Naive thymus-derived CD4-positive, alpha-beta T cell (primary cell): ENCODE measurements at regions of chr16 and their contacts with region 1.

Region 1: GRCh38 chr16:3264137-3265036 is 8.0 kb upstream of the MEFV start:
- DNase-seq: peak; percentile 88 to 97 (median 96)
- ATAC-seq: peak; percentile 88
- H3K4me3 ChIP-seq: peak overlapping the region; percentile 81
- H3K4me3 Mint-ChIP-seq: peak overlapping the region; percentile 84 to 97 (median 93)
- H3K27ac ChIP-seq: peak overlapping the region; percentile 92
- H3K27ac Mint-ChIP-seq: peak overlapping the region; percentile 93 to 98 (median 97)
- H3K4me1 ChIP-seq: peaks cover 18 to 20% of the 10 kb centered on the region in 2 donors
- H3K4me1 Mint-ChIP-seq: peaks cover 6 to 42% (median 29%) of the 10 kb centered on the region in 7 donors
- H3K27me3 ChIP-seq: no peaks in the 10 kb centered on the region
- H3K27me3 Mint-ChIP-seq: no peaks in the 10 kb centered on the region

Region 2: GRCh38 chr16:3158471-3159314 is 105.7 kb before region 1 on chr16:
- CTCF ChIA-PET with region 1: interaction called, 3 read pairs
- POLR2A ChIA-PET with region 1: interaction called, 5 read pairs
- intact Hi-C with region 1: loop called in 1 of 2 experiments (anchors 2 kb)
- DNase-seq: peak; percentile 80 to 98 (median 91)
- ATAC-seq: peak; percentile 97
- H3K4me3 ChIP-seq: peak overlapping the region; percentile 86
- H3K4me3 Mint-ChIP-seq: peak overlapping the region; percentile 87 to 94 (median 92)
- H3K27ac ChIP-seq: peak overlapping the region; percentile 86
- H3K27ac Mint-ChIP-seq: peak overlapping the region; percentile 90 to 99 (median 95)
- H3K4me1 ChIP-seq: peaks cover 5 to 9% of the 10 kb centered on the region in 2 donors
- H3K4me1 Mint-ChIP-seq: peaks cover 10 to 42% (median 28%) of the 10 kb centered on the region in 7 donors
- H3K27me3 ChIP-seq: no peaks in the 10 kb centered on the region
- H3K27me3 Mint-ChIP-seq: peaks cover 0 to 26% (median 0%) of the 10 kb centered on the region in 5 donors

Region 3: DNA sequence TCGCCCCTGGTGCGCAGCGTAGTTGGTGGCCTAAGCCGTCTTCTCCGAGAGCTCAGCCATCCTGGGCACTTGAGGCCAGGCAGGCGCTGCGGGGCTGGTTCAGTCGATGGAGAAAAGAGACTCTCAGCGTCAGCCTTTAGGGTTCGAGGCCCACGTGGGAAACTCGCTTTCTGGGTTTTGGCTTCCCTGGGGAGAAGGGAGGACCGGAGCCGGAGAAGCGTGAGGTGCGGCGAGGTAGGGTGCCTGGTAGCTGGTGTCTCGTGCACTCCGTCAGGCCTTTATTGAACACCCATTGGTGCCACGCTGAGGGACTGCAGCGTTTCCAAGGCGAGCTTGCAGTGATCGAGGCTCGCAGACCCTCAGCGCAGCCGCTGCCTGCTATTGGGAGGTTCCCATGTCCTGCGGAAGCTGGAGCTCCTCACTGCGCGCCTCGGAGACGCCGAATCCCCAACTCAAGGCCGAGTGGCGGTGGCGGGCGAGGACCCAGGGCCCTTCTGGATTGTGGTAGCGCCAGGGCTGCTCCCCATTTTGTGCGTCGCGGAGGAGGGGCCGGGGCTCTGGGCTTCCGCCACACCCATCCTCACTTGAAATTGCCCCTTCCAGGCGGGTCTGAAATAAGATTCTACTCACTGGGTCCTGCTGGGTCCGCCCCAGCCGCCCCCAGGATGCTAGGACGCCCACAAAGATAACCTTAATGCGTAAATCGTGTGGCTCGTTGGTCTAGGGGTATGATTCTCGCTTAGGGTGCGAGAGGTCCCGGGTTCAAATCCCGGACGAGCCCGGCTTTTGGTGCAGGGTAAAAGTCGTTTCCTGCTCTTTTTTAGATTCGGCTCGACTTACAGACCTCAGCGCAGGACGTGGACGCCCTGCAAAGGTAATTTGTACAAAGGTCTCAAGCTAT is 75.2 kb before region 1 on chr16:
- CTCF ChIA-PET with region 1: no interaction called
- POLR2A ChIA-PET with region 1: interaction called, 6 read pairs
- intact Hi-C with region 1: loop called in 1 of 2 experiments (anchors 2 kb)
- DNase-seq: peak in 2 of 9 donors; percentile 32 to 53
- ATAC-seq: peak; percentile 44
- H3K4me3 ChIP-seq: peak overlapping the region; percentile 6
- H3K4me3 Mint-ChIP-seq: peak overlapping the region; percentile 64 to 86 (median 78)
- H3K27ac ChIP-seq: no peak overlapping the region
- H3K27ac Mint-ChIP-seq: peak overlapping the region in 7 of 9 donors; percentile 28 to 88 (median 72)
- H3K4me1 ChIP-seq: peaks cover 23 to 26% of the 10 kb centered on the region in 2 donors
- H3K4me1 Mint-ChIP-seq: peaks cover 31 to 49% (median 43%) of the 10 kb centered on the region in 7 donors
- H3K27me3 ChIP-seq: peaks cover 28 to 32% of the 10 kb centered on the region in 2 donors
- H3K27me3 Mint-ChIP-seq: peaks cover 65 to 74% (median 72%) of the 10 kb centered on the region in 5 donors

Region 4: DNA sequence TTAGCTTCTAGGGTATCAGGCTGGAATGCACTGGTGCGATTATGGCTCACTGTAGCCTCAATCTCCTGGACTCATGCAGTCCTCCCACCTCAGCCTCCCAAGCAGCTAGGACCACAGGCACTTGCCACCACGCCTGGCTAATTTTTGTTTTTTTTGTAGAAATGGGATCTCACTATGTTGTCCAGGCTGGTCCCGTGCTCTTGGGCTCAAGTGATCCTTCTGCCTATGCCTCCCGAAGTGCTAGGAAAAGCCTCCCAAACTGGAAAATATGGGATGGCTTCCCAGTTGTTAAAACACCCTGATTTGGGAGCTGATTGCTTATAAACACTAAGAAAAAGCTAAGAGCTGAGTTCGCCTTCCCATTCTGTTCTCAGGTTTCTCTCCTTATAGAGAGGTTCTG is 12.3 kb after region 1 on chr16:
- CTCF ChIA-PET with region 1: no interaction called
- POLR2A ChIA-PET with region 1: interaction called, 86 read pairs
- intact Hi-C with region 1: no loop called
- DNase-seq: no peak
- ATAC-seq: no peak
- H3K4me3 ChIP-seq: no peak overlapping the region
- H3K4me3 Mint-ChIP-seq: no peak overlapping the region
- H3K27ac ChIP-seq: no peak overlapping the region
- H3K27ac Mint-ChIP-seq: no peak overlapping the region
- H3K4me1 ChIP-seq: peaks cover 0 to 1% of the 10 kb centered on the region in 2 donors
- H3K4me1 Mint-ChIP-seq: peaks cover 0 to 7% (median 0%) of the 10 kb centered on the region in 7 donors
- H3K27me3 ChIP-seq: no peaks in the 10 kb centered on the region
- H3K27me3 Mint-ChIP-seq: peaks cover 0 to 12% (median 0%) of the 10 kb centered on the region in 5 donors

Region 5: GRCh38 chr16:3443108-3444031 is 179.0 kb after region 1 on chr16 and contains the starts of genes NAA60 and ZNF597:
- CTCF ChIA-PET with region 1: no interaction called
- POLR2A ChIA-PET with region 1: interaction called, 3 read pairs
- intact Hi-C with region 1: loop called in 1 of 2 experiments (anchors 1 kb)
- DNase-seq: peak; percentile 38 to 86 (median 79)
- ATAC-seq: peak; percentile 96
- H3K4me3 ChIP-seq: peak within 1 kb of the TSS; percentile 47
- H3K4me3 Mint-ChIP-seq: peak within 1 kb of the TSS; percentile 88 to 100 (median 96)
- H3K27ac ChIP-seq: peak within 1 kb of the TSS; percentile 89
- H3K27ac Mint-ChIP-seq: peak within 1 kb of the TSS; percentile 82 to 98 (median 96)
- H3K4me1 ChIP-seq: peaks cover 5 to 15% of the 10 kb centered on the region in 2 donors
- H3K4me1 Mint-ChIP-seq: peaks cover 0 to 46% (median 24%) of the 10 kb centered on the region in 7 donors
- H3K27me3 ChIP-seq: no peaks in the 10 kb centered on the region
- H3K27me3 Mint-ChIP-seq: peaks cover 0 to 5% (median 0%) of the 10 kb centered on the region in 5 donors
- total RNA-seq, gene NAA60: 38.7 to 63.7 (median 55.3) TPM
- total RNA-seq, gene ZNF597: 2.2 to 5.9 (median 3.8) TPM

Region 6: GRCh38 chr16:3950343-3951193 is 686.2 kb after region 1 on chr16:
- CTCF ChIA-PET with region 1: no interaction called
- POLR2A ChIA-PET with region 1: no interaction called
- intact Hi-C with region 1: no loop called
- DNase-seq: no peak
- ATAC-seq: no peak
- H3K4me3 ChIP-seq: no peak overlapping the region
- H3K4me3 Mint-ChIP-seq: no peak overlapping the region
- H3K27ac ChIP-seq: no peak overlapping the region
- H3K27ac Mint-ChIP-seq: peak overlapping the region in 1 of 9 donors; percentile 52
- H3K4me1 ChIP-seq: no peaks in the 10 kb centered on the region
- H3K4me1 Mint-ChIP-seq: peaks cover 0 to 7% (median 0%) of the 10 kb centered on the region in 7 donors
- H3K27me3 ChIP-seq: no peaks in the 10 kb centered on the region
- H3K27me3 Mint-ChIP-seq: peaks cover 10 to 30% (median 20%) of the 10 kb centered on the region in 5 donors